ENCODE measurements at regions of chr14 and their contacts with region 1.

Region 1: GRCh38 chr14:79265366-79265946 is 945.8 kb downstream of the DIO2 start:
- DNase-seq: no peak
- ATAC-seq: no peak
- H3K4me3 ChIP-seq: no peak overlapping the region
- H3K27ac ChIP-seq: no peak overlapping the region
- H3K4me1 ChIP-seq: no peaks in the 10 kb centered on the region
- H3K27me3 ChIP-seq: no peaks in the 10 kb centered on the region
- CTCF ChIP-seq: no peak

Region 2: GRCh38 chr14:79018836-79019235 is 246.6 kb before region 1 on chr14:
- intact Hi-C with region 1: no loop called
- DNase-seq: no peak
- ATAC-seq: no peak
- H3K4me3 ChIP-seq: no peak overlapping the region
- H3K27ac ChIP-seq: no peak overlapping the region
- H3K4me1 ChIP-seq: no peaks in the 10 kb centered on the region
- H3K27me3 ChIP-seq: no peaks in the 10 kb centered on the region
- CTCF ChIP-seq: no peak

Region 3: GRCh38 chr14:79658224-79658623 is 392.8 kb after region 1 on chr14:
- intact Hi-C with region 1: loop called in 1 of 2 experiments (anchors 10 kb)
- DNase-seq: no peak
- ATAC-seq: no peak
- H3K4me3 ChIP-seq: no peak overlapping the region
- H3K27ac ChIP-seq: no peak overlapping the region
- H3K4me1 ChIP-seq: no peaks in the 10 kb centered on the region
- H3K27me3 ChIP-seq: no peaks in the 10 kb centered on the region
- CTCF ChIP-seq: no peak

Measured in psoas muscle (tissue), 8 donors.